B cell (primary cell): ENCODE measurements at regions of chr3 and their contacts with region 1.

Region 1: GRCh38 chr3:33440323-33441232 is at the start of gene UBP1:
- DNase-seq: peak; percentile 99
- ATAC-seq: peak; percentile 82
- H3K4me3 ChIP-seq: peak within 1 kb of the TSS; percentile 78 to 100 (median 96)
- H3K4me3 Mint-ChIP-seq: peak within 1 kb of the TSS; percentile 100
- H3K27ac ChIP-seq: peak within 1 kb of the TSS; percentile 95 to 97
- H3K27ac Mint-ChIP-seq: peak within 1 kb of the TSS; percentile 100
- H3K4me1 ChIP-seq: peaks cover 32% of the 10 kb centered on the region in 2 donors
- H3K4me1 Mint-ChIP-seq: peaks cover 48% of the 10 kb centered on the region
- H3K27me3 ChIP-seq: no peaks in the 10 kb centered on the region
- H3K27me3 Mint-ChIP-seq: no peaks in the 10 kb centered on the region
- CTCF ChIP-seq: no peak
- total RNA-seq, gene UBP1: 67.3 and 75.4 TPM in 2 replicates

Region 2: GRCh38 chr3:32570421-32571191 is 870.0 kb before region 1 on chr3 and contains the start of gene DYNC1LI1:
- CTCF ChIA-PET with region 1: no interaction called
- POLR2A ChIA-PET with region 1: no interaction called
- intact Hi-C with region 1: loop called (anchors 2 kb)
- DNase-seq: peak; percentile 95
- ATAC-seq: peak; percentile 96
- H3K4me3 ChIP-seq: peak within 1 kb of the TSS; percentile 55 to 96 (median 92)
- H3K4me3 Mint-ChIP-seq: peak within 1 kb of the TSS; percentile 94
- H3K27ac ChIP-seq: peak within 1 kb of the TSS; percentile 84 to 93
- H3K27ac Mint-ChIP-seq: peak within 1 kb of the TSS; percentile 94
- H3K4me1 ChIP-seq: peaks cover 22 to 24% of the 10 kb centered on the region in 2 donors
- H3K4me1 Mint-ChIP-seq: peaks cover 29% of the 10 kb centered on the region
- H3K27me3 ChIP-seq: no peaks in the 10 kb centered on the region
- H3K27me3 Mint-ChIP-seq: no peaks in the 10 kb centered on the region
- CTCF ChIP-seq: no peak
- total RNA-seq, gene DYNC1LI1: 38.8 and 47.8 TPM in 2 replicates

Region 3: DNA sequence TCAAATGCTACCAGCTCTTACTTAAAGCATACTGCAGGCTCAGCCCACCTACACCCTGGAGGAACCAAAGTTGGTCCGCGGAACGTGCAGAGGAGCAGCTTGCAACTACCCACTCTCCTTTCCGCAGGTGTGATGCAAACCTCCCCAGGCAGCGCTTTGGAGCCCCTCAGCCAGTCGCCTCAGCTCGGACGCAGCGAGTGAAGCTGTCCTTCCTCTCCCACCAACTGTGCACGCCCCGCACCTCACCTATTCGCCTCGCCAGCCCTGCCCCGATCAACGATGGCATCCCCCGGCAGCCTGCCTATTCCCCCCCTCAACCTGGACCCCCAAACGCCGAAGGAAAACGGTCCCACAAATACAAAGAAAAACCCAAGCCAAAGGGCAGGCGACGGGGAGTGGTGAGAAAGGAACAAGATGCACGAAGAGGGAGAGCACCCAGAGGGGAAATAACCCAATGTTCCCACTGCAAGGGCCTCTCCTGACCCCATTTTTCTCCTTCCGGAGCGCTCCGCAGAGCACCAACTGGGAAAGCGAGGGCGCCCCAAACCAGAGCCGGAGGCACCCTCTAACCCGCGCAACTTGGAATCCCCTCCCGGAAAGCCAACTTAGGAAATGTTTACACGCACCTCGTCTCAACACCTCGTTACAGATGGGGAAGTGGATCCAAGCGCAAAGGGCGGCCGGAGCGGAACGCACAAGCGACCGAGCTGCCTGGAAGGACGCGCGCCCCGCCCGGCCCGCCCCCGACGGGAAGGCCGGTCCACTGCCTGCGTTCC is 344.3 kb before region 1 on chr3:
- CTCF ChIA-PET with region 1: no interaction called
- POLR2A ChIA-PET with region 1: no interaction called
- intact Hi-C with region 1: loop called (anchors 1 kb)
- DNase-seq: peak; percentile 83
- ATAC-seq: peak; percentile 63
- H3K4me3 ChIP-seq: peak overlapping the region; percentile 83 to 100 (median 94)
- H3K4me3 Mint-ChIP-seq: peak overlapping the region; percentile 96
- H3K27ac ChIP-seq: peak overlapping the region; percentile 94 to 96
- H3K27ac Mint-ChIP-seq: peak overlapping the region; percentile 94
- H3K4me1 ChIP-seq: peaks cover 11 to 21% of the 10 kb centered on the region in 2 donors
- H3K4me1 Mint-ChIP-seq: peaks cover 35% of the 10 kb centered on the region
- H3K27me3 ChIP-seq: no peaks in the 10 kb centered on the region
- H3K27me3 Mint-ChIP-seq: no peaks in the 10 kb centered on the region
- CTCF ChIP-seq: no peak

Region 4: DNA sequence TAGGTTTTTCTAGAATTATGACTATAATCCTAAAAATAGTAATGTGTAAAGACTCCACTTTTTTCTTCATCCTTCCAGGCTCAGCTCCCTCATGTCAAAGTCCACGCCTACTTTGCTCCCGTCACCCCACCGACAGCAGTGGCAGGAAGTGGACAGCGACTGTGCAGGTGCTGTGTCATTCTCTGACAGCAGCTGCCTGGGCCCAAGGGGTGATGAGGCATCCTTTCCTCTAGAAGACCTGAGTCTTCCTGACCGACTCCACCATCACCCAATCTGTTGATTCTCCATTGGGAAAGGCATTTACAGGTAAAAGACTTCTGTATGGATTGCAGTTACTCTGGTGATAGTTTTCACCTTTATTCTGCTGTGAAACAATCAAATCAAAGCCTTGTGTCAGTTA is 55.2 kb before region 1 on chr3:
- CTCF ChIA-PET with region 1: no interaction called
- POLR2A ChIA-PET with region 1: no interaction called
- intact Hi-C with region 1: no loop called
- DNase-seq: no peak
- ATAC-seq: no peak
- H3K4me3 ChIP-seq: no peak overlapping the region
- H3K4me3 Mint-ChIP-seq: no peak overlapping the region
- H3K27ac ChIP-seq: no peak overlapping the region
- H3K27ac Mint-ChIP-seq: no peak overlapping the region
- H3K4me1 ChIP-seq: no peaks in the 10 kb centered on the region
- H3K4me1 Mint-ChIP-seq: no peaks in the 10 kb centered on the region
- H3K27me3 ChIP-seq: no peaks in the 10 kb centered on the region
- H3K27me3 Mint-ChIP-seq: no peaks in the 10 kb centered on the region
- CTCF ChIP-seq: no peak

Region 5: DNA sequence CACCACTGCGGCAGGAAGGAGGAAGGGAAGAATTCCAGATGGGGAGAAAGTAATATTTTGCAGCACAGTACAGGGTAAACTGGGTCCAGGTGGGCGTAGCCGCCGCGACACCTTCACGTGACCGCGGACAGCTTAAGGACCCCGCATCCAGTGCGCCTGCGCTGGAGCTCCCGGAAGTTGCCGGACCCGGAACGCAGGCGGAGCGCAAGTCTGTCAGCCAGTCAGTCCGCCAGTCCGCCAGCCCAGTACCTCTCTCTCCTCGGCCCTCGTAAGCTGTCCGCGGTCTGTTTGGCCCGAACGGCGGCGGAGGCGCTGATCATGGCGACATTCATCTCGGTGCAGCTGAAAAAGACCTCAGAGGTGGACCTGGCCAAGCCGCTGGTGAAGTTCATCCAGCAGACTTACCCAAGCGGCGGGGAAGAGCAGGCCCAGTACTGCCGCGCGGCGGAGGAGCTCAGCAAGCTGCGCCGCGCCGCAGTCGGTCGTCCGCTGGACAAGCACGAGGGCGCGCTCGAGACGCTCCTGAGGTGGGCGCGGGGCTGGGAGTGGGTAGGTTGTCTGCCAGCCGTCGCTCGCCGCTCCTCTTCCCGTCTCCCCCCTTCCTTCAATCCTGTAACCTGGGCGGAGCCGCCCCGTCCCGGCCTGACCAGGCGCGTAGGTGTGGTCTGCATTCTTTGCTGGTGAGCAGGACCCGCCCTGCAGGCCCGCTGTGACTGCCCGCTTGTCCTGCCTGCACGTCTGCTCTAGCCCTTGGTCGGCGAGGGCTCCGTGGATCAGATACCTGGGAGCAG is 358.0 kb after region 1 on chr3 and contains the start of gene PDCD6IP:
- CTCF ChIA-PET with region 1: interaction called, 7 read pairs
- POLR2A ChIA-PET with region 1: interaction called, 5 read pairs
- intact Hi-C with region 1: loop called (anchors 1 kb)
- DNase-seq: peak; percentile 95
- ATAC-seq: peak; percentile 86
- H3K4me3 ChIP-seq: peak within 1 kb of the TSS; percentile 89 to 94 (median 93)
- H3K4me3 Mint-ChIP-seq: peak within 1 kb of the TSS; percentile 99
- H3K27ac ChIP-seq: peak within 1 kb of the TSS; percentile 84 to 86
- H3K27ac Mint-ChIP-seq: peak within 1 kb of the TSS; percentile 96
- H3K4me1 ChIP-seq: peaks cover 28 to 32% of the 10 kb centered on the region in 2 donors
- H3K4me1 Mint-ChIP-seq: peaks cover 46% of the 10 kb centered on the region
- H3K27me3 ChIP-seq: no peaks in the 10 kb centered on the region
- H3K27me3 Mint-ChIP-seq: no peaks in the 10 kb centered on the region
- CTCF ChIP-seq: peak; percentile 25
- total RNA-seq, gene PDCD6IP: 276 TPM in 2 replicates